ENCODE measurements at regions of chr4 and their contacts with region 1.

Region 1: GRCh38 chr4:48085821-48086607 is 48.0 kb downstream of the TXK start:
- DNase-seq: no peak
- H3K4me3 ChIP-seq: no peak overlapping the region
- H3K4me3 Mint-ChIP-seq: no peak overlapping the region
- H3K27ac ChIP-seq: no peak overlapping the region
- H3K27ac Mint-ChIP-seq: no peak overlapping the region
- H3K4me1 ChIP-seq: no peaks in the 10 kb centered on the region
- H3K4me1 Mint-ChIP-seq: no peaks in the 10 kb centered on the region
- H3K27me3 ChIP-seq: no peaks in the 10 kb centered on the region
- H3K27me3 Mint-ChIP-seq: no peaks in the 10 kb centered on the region
- CTCF ChIP-seq: no peak

Region 2: DNA sequence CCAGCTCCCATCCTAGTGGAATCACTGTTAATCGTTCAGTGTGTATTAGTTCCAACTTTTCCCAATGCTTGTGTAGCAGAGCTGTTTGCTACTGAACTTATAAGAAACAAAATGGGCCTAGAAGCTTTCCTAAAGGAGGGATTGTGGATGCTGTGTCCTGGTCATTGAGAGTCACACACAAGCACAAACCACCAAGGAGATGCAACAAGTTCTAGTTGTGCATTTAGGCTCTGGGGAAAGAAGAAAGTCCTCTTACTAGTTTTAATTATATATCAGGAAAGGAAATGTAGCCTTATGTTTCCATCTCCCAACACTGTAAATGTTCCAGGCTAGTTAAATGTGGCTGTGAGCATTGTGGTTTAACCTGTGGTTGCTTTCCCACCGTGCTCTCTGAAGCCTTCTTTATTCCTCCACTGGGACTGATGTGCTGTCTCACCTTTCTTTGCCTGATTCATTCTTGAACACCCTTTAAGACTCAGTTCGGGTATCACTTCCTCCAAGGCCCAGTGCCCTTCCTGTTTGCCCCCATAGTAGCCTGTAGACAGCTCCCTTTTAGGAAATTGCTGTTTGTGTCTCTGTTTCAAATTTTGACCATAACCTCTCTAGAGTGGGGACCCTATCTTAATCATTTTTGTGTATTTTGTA is 566.7 kb before region 1 on chr4:
- intact Hi-C with region 1: no loop called
- DNase-seq: peak in 2 of 3 donors; percentile 16 to 28
- H3K4me3 ChIP-seq: no peak overlapping the region
- H3K4me3 Mint-ChIP-seq: no peak overlapping the region
- H3K27ac ChIP-seq: peak overlapping the region in 1 of 2 donors; percentile 21
- H3K27ac Mint-ChIP-seq: peak overlapping the region in 6 of 7 donors; percentile 0 to 71 (median 60)
- H3K4me1 ChIP-seq: peaks cover 6 to 10% of the 10 kb centered on the region in 2 donors
- H3K4me1 Mint-ChIP-seq: peaks cover 9% of the 10 kb centered on the region
- H3K27me3 ChIP-seq: no peaks in the 10 kb centered on the region
- H3K27me3 Mint-ChIP-seq: peaks cover 0 to 2% (median 0%) of the 10 kb centered on the region in 3 donors
- CTCF ChIP-seq: no peak

Region 3: DNA sequence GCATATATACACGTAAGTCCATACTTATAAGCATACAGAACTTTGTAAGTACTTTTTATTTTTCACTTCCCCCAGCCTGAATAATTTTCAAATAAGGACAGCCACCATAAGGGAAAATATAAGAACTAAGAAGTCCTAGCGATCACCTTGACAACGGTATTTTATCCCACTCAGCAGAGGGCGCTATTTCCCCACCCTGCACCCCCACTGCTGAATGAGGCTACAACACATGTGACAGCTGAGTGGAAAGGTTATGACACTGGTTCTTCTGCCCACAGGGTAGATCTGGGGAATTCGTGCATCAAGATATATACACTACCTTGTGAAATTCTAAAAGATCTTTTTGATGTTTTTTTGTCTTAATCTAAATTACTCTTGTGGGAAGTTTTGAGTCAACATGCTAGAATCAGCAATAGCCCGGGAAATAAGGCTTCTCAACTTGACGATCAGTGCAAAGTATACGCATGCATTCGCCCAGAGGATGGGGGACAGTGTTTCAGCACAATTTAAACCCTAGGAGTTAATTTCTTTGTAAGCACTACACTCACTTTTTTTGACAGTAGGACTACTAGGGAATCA is 399.6 kb before region 1 on chr4:
- intact Hi-C with region 1: loop called in 1 of 2 experiments (anchors 5 kb)
- DNase-seq: peak; percentile 49 to 57 (median 51)
- H3K4me3 ChIP-seq: no peak overlapping the region
- H3K4me3 Mint-ChIP-seq: no peak overlapping the region
- H3K27ac ChIP-seq: no peak overlapping the region
- H3K27ac Mint-ChIP-seq: no peak overlapping the region
- H3K4me1 ChIP-seq: no peaks in the 10 kb centered on the region
- H3K4me1 Mint-ChIP-seq: peaks cover 2% of the 10 kb centered on the region
- H3K27me3 ChIP-seq: peaks cover 0 to 4% of the 10 kb centered on the region in 2 donors
- H3K27me3 Mint-ChIP-seq: peaks cover 2 to 11% (median 4%) of the 10 kb centered on the region in 3 donors
- CTCF ChIP-seq: peak; percentile 92

Region 4: GRCh38 chr4:48002267-48002666 is 83.7 kb before region 1 on chr4:
- intact Hi-C with region 1: loop called in 1 of 2 experiments (anchors 5 kb)
- DNase-seq: no peak
- H3K4me3 ChIP-seq: no peak overlapping the region
- H3K4me3 Mint-ChIP-seq: no peak overlapping the region
- H3K27ac ChIP-seq: no peak overlapping the region
- H3K27ac Mint-ChIP-seq: no peak overlapping the region
- H3K4me1 ChIP-seq: no peaks in the 10 kb centered on the region
- H3K4me1 Mint-ChIP-seq: no peaks in the 10 kb centered on the region
- H3K27me3 ChIP-seq: no peaks in the 10 kb centered on the region
- H3K27me3 Mint-ChIP-seq: peaks cover 0 to 2% (median 0%) of the 10 kb centered on the region in 3 donors
- CTCF ChIP-seq: no peak

Region 5: DNA sequence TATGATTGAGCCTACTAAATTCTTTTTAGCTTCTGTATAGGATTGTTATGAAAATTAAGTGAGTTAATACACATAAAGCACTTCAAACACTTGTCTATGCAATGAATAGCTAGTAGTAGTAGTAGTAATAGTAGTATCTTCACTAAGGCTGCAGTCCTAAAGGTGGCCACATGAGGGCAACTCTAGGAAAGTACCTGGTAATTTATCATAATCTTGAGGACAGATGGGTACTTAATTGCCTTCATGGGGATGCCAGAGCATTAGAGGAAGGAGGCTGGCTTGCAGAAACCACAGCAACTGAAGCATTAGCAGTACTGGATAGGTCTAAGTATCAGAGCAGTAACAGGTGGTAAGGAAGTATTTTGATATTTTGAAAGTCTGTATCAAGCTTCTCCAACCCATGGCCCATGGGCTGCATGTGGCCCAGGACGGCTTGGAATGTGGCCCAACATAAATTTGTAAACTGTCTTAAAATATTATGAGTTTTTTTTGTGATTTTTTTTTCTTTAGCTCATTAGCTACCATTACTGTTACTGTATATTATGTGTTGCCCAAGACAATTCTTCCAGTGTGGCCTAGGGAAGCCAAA is 52.1 kb before region 1 on chr4:
- intact Hi-C with region 1: loop called (anchors 2 to 5 kb)
- DNase-seq: peak; percentile 38 to 74 (median 65)
- H3K4me3 ChIP-seq: no peak overlapping the region
- H3K4me3 Mint-ChIP-seq: no peak overlapping the region
- H3K27ac ChIP-seq: no peak overlapping the region
- H3K27ac Mint-ChIP-seq: no peak overlapping the region
- H3K4me1 ChIP-seq: peaks cover 18 to 27% of the 10 kb centered on the region in 2 donors
- H3K4me1 Mint-ChIP-seq: peaks cover 25% of the 10 kb centered on the region
- H3K27me3 ChIP-seq: no peaks in the 10 kb centered on the region
- H3K27me3 Mint-ChIP-seq: peaks cover 0 to 2% (median 1%) of the 10 kb centered on the region in 3 donors
- CTCF ChIP-seq: peak; percentile 84

Region 6: GRCh38 chr4:48602222-48602621 is 516.2 kb after region 1 on chr4:
- intact Hi-C with region 1: no loop called
- DNase-seq: no peak
- H3K4me3 ChIP-seq: no peak overlapping the region
- H3K4me3 Mint-ChIP-seq: no peak overlapping the region
- H3K27ac ChIP-seq: no peak overlapping the region
- H3K27ac Mint-ChIP-seq: no peak overlapping the region
- H3K4me1 ChIP-seq: no peaks in the 10 kb centered on the region
- H3K4me1 Mint-ChIP-seq: no peaks in the 10 kb centered on the region
- H3K27me3 ChIP-seq: no peaks in the 10 kb centered on the region
- H3K27me3 Mint-ChIP-seq: no peaks in the 10 kb centered on the region
- CTCF ChIP-seq: no peak

Measured in CD14-positive monocyte (primary cell).